ENCODE measurements at regions of chr12 and their contacts with region 1.

Region 1: DNA sequence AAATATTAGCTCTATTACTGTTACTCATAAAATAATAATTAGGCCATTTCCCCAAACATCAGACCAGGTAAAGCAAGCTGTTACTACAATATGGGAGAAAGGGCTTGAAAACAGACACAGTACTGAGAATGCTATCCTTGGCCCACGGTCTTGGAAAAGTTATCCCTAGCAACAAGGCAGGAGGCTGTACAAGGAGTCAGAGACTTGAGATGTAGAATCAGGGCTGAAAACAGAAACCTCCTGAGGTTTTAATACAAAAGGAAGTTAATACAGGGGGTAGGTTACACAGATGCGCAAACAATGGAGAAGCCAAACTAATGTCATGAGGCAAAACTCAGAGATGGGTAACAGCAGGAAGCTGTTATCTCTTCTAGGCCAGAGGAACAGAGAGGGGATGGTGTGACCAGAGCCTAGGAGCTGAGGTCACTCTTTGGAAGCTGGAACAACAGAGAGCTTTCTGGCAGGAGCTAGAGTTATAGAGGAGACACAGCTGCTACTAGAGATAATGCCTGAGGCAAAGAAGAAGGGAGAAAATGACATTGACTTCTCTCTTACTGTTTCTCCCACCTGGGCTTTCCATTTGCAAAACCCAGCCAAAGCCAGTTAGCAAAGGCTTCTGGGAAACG is 248.8 kb downstream of the SUDS3 start:
- DNase-seq: no peak
- H3K4me3 ChIP-seq: no peak overlapping the region
- H3K27ac ChIP-seq: no peak overlapping the region
- H3K4me1 ChIP-seq: no peaks in the 10 kb centered on the region
- H3K27me3 ChIP-seq: no peaks in the 10 kb centered on the region
- CTCF ChIP-seq: no peak

Region 2: GRCh38 chr12:118436002-118436730 is 189.0 kb before region 1 on chr12:
- CTCF ChIA-PET with region 1: no interaction called
- POLR2A ChIA-PET with region 1: no interaction called
- intact Hi-C with region 1: loop called (anchors 5 kb)
- DNase-seq: peak; percentile 47
- H3K4me3 ChIP-seq: no peak overlapping the region
- H3K27ac ChIP-seq: no peak overlapping the region
- H3K4me1 ChIP-seq: peaks cover 6% of the 10 kb centered on the region
- H3K27me3 ChIP-seq: no peaks in the 10 kb centered on the region
- CTCF ChIP-seq: peak; percentile 62